Gastrocnemius medialis (tissue), 4 donors: ENCODE measurements at regions of chr7 and their contacts with region 1.

Region 1: GRCh38 chr7:77798394-77799077 is at the starts of genes PHTF2 and TMEM60:
- DNase-seq: peak; percentile 99
- ATAC-seq: peak; percentile 81 to 85
- H3K4me3 ChIP-seq: peak within 1 kb of the TSS; percentile 86 to 93 (median 89)
- H3K27ac ChIP-seq: peak within 1 kb of the TSS; percentile 98 to 99 (median 98)
- H3K4me1 ChIP-seq: peaks cover 34 to 62% of the 10 kb centered on the region in 2 donors
- H3K27me3 ChIP-seq: no peaks in the 10 kb centered on the region
- CTCF ChIP-seq: peak; percentile 30 to 66 (median 47)
- POLR2A ChIP-seq: peak; percentile 93 to 96
- total RNA-seq, gene PHTF2: 81.2 to 163 (median 108) TPM
- total RNA-seq, gene TMEM60: 7.0 to 26.9 (median 13.3) TPM

Region 2: GRCh38 chr7:76327610-76328009 is 1470.9 kb before region 1 on chr7:
- in situ Hi-C with region 1: no loop called
- intact Hi-C with region 1: loop called (anchors 10 kb)
- DNase-seq: no peak
- ATAC-seq: no peak
- H3K4me3 ChIP-seq: no peak overlapping the region
- H3K27ac ChIP-seq: peak overlapping the region; percentile 97 to 100 (median 98)
- H3K4me1 ChIP-seq: peaks cover 73 to 80% of the 10 kb centered on the region in 2 donors
- H3K27me3 ChIP-seq: no peaks in the 10 kb centered on the region
- CTCF ChIP-seq: no peak
- POLR2A ChIP-seq: no peak

Region 3: DNA sequence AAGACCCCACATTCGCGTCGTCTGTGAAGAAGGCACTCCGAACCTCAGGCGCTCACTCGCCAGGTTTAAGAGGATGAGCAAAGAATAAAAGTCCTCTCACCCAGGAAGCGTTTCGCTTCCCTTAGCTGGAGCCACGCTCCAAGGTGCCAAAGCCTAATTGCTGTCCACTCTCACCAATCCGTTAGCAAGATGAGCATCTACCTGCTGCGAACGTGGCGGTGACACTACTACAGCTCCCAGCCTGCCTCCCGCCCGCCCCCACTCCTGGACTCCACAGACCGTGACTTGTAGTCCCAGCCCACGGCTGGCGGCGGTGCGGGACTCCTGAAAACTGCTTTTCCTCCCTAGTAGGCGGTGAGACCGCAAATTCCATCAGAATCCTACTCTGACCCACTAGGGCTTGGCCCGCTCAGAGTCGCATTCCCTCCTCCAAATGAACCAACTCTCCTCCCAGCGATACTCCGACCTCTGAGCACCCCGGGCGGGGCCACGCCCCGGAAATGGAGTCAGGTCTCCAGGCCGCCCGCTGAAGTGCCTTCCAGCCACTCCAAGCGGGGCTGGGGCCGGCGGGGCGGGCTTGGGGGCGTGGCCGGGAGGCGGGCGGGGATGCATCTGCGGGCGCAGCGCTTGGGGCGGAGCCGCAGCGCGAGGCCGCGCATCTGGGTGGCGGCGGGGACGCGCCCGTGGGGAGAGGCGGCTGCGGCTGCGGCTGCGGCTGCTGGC is 262.0 kb before region 1 on chr7:
- in situ Hi-C with region 1: no loop called
- intact Hi-C with region 1: loop called (anchors 2 kb)
- DNase-seq: peak; percentile 96 to 97
- ATAC-seq: peak; percentile 84 to 87
- H3K4me3 ChIP-seq: peak overlapping the region; percentile 84 to 99 (median 88)
- H3K27ac ChIP-seq: peak overlapping the region; percentile 89 to 99 (median 92)
- H3K4me1 ChIP-seq: peaks cover 16 to 23% of the 10 kb centered on the region in 2 donors
- H3K27me3 ChIP-seq: no peaks in the 10 kb centered on the region
- CTCF ChIP-seq: no peak
- POLR2A ChIP-seq: peak; percentile 89 to 96

Region 4: DNA sequence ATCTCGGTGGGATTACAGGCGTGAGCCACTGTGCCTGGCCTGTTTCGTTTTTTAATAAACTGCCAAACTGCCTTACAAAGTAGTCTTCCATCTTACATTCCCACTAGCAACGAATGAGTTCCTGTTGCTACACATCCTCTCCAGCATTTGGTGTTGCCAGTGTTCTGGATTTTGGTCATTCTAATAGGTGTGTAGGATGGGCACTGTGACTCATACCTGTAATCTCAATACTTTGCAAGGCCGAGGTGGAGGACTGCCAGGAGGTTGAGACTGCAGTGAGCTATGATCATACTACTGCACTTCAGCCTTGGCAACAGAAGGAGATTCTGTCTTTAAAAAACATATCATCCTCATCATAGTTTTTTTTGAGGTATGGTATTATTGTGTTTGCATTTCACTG is 123.7 kb before region 1 on chr7:
- in situ Hi-C with region 1: no loop called
- intact Hi-C with region 1: no loop called
- DNase-seq: no peak
- ATAC-seq: no peak
- H3K4me3 ChIP-seq: no peak overlapping the region
- H3K27ac ChIP-seq: no peak overlapping the region
- H3K4me1 ChIP-seq: no peaks in the 10 kb centered on the region
- H3K27me3 ChIP-seq: no peaks in the 10 kb centered on the region
- CTCF ChIP-seq: no peak
- POLR2A ChIP-seq: no peak

Region 5: GRCh38 chr7:77696198-77697028 is 102.1 kb before region 1 on chr7 and contains the start of gene RSBN1L:
- in situ Hi-C with region 1: loop called in 1 of 4 experiments (anchors 10 kb)
- intact Hi-C with region 1: loop called (anchors 2 kb)
- DNase-seq: peak; percentile 99
- ATAC-seq: peak; percentile 92 to 96
- H3K4me3 ChIP-seq: peak within 1 kb of the TSS; percentile 90 to 100 (median 96)
- H3K27ac ChIP-seq: peak within 1 kb of the TSS; percentile 97 to 99 (median 98)
- H3K4me1 ChIP-seq: peaks cover 39 to 40% of the 10 kb centered on the region in 2 donors
- H3K27me3 ChIP-seq: no peaks in the 10 kb centered on the region
- CTCF ChIP-seq: peak; percentile 24 to 54 (median 43)
- POLR2A ChIP-seq: peak; percentile 90 to 98
- total RNA-seq, gene RSBN1L: 5.1 to 11.7 (median 8.7) TPM

Region 6: DNA sequence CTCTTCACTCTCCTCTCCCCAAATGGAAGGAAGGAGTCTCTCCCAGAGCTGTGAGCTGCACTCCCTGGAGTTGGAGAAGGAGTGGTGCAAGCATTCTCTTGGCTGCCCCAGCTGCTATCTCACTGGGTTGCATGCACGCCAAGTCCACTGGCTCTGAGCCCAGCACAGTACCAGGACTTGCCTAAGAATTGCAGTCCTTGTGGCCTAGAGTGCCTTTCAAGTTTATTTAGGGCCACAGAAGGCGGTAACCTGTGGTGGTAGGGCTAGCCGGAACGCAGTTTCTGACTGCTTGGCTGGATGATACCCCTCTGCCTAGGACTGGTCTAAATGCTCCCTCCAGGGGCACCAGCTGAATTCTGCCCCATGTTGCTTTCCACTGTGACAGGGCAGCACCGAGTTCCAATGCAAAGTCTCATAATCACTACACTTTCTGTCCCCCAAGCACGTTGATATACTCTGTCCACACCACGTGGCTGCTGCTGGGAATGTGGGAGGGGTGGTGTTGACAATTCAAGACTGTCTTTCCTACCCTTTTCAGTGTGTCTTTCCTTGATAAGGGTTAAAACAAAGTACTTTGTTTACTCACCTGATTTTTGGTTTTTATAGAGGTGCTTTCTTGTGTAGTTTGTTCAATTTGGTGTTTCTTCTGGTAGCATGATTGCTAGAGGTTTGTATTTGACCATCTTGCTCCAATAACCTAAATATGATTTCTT is 57.0 kb after region 1 on chr7:
- in situ Hi-C with region 1: no loop called
- intact Hi-C with region 1: loop called (anchors 5 kb)
- DNase-seq: peak; percentile 87 to 98
- ATAC-seq: peak; percentile 94 to 97
- H3K4me3 ChIP-seq: no peak overlapping the region
- H3K27ac ChIP-seq: peak overlapping the region; percentile 58 to 87 (median 82)
- H3K4me1 ChIP-seq: peaks cover 30 to 35% of the 10 kb centered on the region in 2 donors
- H3K27me3 ChIP-seq: no peaks in the 10 kb centered on the region
- CTCF ChIP-seq: peak in 1 of 5 experiments; percentile 16
- POLR2A ChIP-seq: no peak

Region 7: GRCh38 chr7:77887567-77887966 is 89.0 kb after region 1 on chr7:
- in situ Hi-C with region 1: no loop called
- intact Hi-C with region 1: loop called (anchors 5 kb)
- DNase-seq: no peak
- ATAC-seq: peak; percentile 91 to 97
- H3K4me3 ChIP-seq: no peak overlapping the region
- H3K27ac ChIP-seq: peak overlapping the region; percentile 64 to 75 (median 72)
- H3K4me1 ChIP-seq: peaks cover 26 to 36% of the 10 kb centered on the region in 2 donors
- H3K27me3 ChIP-seq: no peaks in the 10 kb centered on the region
- CTCF ChIP-seq: no peak
- POLR2A ChIP-seq: no peak

Region 8: DNA sequence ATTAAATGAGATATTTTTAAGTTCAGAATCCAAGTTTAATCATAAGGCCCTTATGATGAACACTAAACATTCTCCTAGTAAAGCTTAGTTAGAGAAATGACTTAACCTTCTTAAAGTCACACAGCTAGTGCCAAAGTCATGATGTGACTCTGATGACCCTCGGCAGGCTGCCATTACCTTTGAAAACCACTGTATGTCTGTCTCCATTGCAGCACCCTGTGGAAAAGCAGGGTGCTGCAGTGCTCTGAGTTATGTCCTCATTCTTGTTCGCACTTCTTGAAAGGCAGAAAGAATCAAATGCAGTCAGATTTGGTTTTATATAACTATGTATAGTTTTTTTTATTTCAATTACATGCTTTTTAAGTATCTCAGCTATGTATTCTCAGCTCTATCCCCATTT is 105.1 kb after region 1 on chr7:
- in situ Hi-C with region 1: no loop called
- intact Hi-C with region 1: loop called (anchors 5 kb)
- DNase-seq: peak; percentile 41 to 84
- ATAC-seq: peak; percentile 90 to 95
- H3K4me3 ChIP-seq: no peak overlapping the region
- H3K27ac ChIP-seq: peak overlapping the region in 3 of 4 donors; percentile 26 to 41 (median 33)
- H3K4me1 ChIP-seq: peaks cover 0 to 5% of the 10 kb centered on the region in 2 donors
- H3K27me3 ChIP-seq: no peaks in the 10 kb centered on the region
- CTCF ChIP-seq: peak; percentile 27 to 63 (median 39)
- POLR2A ChIP-seq: no peak